ENCODE measurements at regions of chr3 and their contacts with region 1.

Region 1: GRCh38 chr3:112327371-112327951 is 5.5 kb upstream of the CD200 start:
- DNase-seq: no peak
- ATAC-seq: peak; percentile 59

Region 2: DNA sequence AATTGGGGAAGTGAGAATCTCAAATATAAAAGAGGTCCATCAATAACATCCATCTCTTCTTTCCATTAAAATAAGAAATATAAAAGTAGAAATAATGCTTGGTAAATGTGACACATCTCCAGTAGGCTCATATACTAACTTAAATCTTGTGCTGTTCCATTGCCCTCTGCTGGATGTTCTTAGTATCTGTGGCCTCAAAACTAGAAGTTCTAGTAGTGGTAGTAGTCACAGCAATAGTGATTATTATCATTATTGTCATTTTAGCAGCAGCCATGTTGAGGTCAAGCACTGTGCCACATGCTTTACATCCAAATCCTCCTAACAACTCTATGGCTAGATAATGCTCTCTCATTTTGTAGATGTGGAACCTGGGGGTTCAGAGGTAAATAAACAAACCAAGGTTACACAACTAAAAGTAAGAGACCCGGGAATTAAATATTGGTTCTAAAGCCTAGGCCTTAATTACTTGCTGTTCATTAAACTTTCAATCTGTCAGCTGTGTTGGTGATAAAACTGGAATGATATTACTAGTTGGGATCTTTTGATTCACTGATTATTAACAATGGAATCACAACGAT is 192.1 kb after region 1 on chr3:
- intact Hi-C with region 1: loop called (anchors 10 kb)
- DNase-seq: no peak
- ATAC-seq: peak; percentile 61